ENCODE measurements at regions of chr3 and their contacts with region 1.

Region 1: DNA sequence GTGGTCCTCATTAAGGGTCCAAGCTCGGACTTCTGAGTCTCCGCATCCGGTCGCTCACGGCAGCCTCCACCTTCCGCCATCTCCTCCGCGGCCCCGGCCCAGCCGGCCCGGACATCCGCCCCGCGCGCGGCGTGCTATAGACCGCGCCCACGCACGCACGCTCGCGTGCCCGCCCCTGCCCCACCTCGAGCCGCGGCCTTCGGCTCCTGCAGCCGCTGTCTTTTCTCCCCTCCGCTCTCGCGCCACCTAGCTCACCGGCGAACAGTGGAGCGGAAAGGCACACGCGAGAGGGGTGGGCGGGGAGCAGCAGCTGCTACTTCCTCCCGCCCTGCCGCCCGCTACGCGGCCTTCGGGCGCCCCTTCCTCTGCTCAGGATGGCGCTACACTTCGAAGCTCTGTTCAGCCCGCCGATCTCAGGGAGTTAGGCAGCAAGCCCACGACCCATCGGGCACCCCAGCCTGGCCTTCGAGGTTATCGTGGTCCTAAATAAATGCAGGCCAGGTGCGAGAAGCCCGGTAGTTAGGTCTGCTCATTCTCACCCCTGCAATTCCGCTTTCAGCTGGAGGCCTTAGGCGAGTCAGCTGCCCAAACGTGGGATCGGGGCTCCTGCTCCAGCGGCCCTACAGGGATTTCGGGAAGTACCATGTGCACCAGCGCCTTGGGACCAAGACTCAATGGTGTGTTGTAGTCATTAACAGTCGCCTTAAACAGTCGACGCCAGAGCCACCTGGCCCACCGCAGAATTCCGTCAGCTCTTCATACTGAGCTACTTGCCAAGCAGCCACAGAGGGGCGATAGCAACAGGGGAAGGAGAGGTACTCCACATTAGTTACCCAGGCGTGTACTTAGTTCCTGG is at the start of gene USP4:
- DNase-seq: peak; percentile 96
- H3K4me3 Mint-ChIP-seq: peak within 1 kb of the TSS; percentile 91
- H3K27ac Mint-ChIP-seq: peak within 1 kb of the TSS; percentile 100
- H3K4me1 Mint-ChIP-seq: peaks cover 44% of the 10 kb centered on the region
- H3K27me3 Mint-ChIP-seq: no peaks in the 10 kb centered on the region
- total RNA-seq, gene USP4: 68.0 to 69.7 TPM

Region 2: DNA sequence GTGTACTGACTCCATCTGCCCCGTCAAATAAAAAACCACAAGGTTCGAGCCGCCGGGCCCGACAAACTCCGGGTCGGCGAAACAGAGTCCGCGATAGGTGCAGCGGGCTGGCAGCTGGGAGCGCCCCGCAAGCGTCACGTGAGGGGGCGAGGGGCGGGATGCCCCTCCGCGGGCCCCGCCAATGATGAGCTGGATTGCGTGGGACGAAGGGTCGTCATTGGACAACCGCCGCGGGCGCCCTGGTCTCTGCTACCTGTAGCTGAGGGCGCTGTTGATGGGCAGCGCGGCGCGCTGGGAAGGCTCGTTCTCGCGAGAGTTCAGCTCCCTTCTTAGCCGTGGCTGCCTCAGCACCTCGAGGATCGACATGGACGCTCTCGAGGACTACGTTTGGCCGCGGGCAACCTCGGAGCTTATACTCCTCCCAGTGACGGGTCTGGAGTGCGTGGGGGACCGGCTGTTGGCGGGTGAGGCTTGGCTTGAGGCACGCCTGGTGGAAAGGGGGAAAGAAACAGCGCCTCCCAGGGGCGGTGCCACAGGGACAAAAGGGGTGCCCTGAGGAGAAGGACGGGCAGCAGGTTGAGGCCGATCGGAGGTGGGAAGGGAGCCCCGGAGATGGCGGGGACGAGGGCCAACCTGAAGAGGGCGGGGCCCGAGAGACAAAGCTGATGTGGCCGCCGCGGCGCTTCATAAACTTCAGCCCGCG is 333.0 kb before region 1 on chr3 and contains the start of gene WDR6:
- CTCF ChIA-PET with region 1: no interaction called
- intact Hi-C with region 1: loop called (anchors 5 kb)
- DNase-seq: peak; percentile 99
- H3K4me3 Mint-ChIP-seq: peak within 1 kb of the TSS; percentile 99
- H3K27ac Mint-ChIP-seq: peak within 1 kb of the TSS; percentile 99
- H3K4me1 Mint-ChIP-seq: peaks cover 19% of the 10 kb centered on the region
- H3K27me3 Mint-ChIP-seq: no peaks in the 10 kb centered on the region
- total RNA-seq, gene WDR6: 119 to 120 TPM

Region 3: GRCh38 chr3:49171119-49171774 is 168.9 kb before region 1 on chr3 and contains the start of gene KLHDC8B:
- CTCF ChIA-PET with region 1: interaction called, 4 read pairs
- intact Hi-C with region 1: loop called (anchors 1 kb)
- DNase-seq: peak; percentile 88
- H3K4me3 Mint-ChIP-seq: peak within 1 kb of the TSS; percentile 67
- H3K27ac Mint-ChIP-seq: no peak within 1 kb of the TSS
- H3K4me1 Mint-ChIP-seq: peaks cover 9% of the 10 kb centered on the region
- H3K27me3 Mint-ChIP-seq: no peaks in the 10 kb centered on the region
- total RNA-seq, gene KLHDC8B: 1.8 to 2.4 TPM

Region 4: GRCh38 chr3:49358217-49358883 is 18.2 kb after region 1 on chr3 and contains the start of gene GPX1:
- CTCF ChIA-PET with region 1: interaction called, 11 read pairs
- intact Hi-C with region 1: loop called (anchors 1 kb)
- DNase-seq: peak; percentile 93
- H3K4me3 Mint-ChIP-seq: peak within 1 kb of the TSS; percentile 92
- H3K27ac Mint-ChIP-seq: peak within 1 kb of the TSS; percentile 94
- H3K4me1 Mint-ChIP-seq: peaks cover 23% of the 10 kb centered on the region
- H3K27me3 Mint-ChIP-seq: no peaks in the 10 kb centered on the region
- total RNA-seq, gene GPX1: 198 to 202 TPM

Region 5: GRCh38 chr3:49411968-49412631 is 71.9 kb after region 1 on chr3 and contains the starts of genes RHOA and TCTA:
- CTCF ChIA-PET with region 1: interaction called, 8 read pairs
- intact Hi-C with region 1: loop called (anchors 1 kb)
- DNase-seq: peak; percentile 99
- H3K4me3 Mint-ChIP-seq: peak within 1 kb of the TSS; percentile 94
- H3K27ac Mint-ChIP-seq: peak within 1 kb of the TSS; percentile 92
- H3K4me1 Mint-ChIP-seq: peaks cover 65% of the 10 kb centered on the region
- H3K27me3 Mint-ChIP-seq: no peaks in the 10 kb centered on the region
- total RNA-seq, gene RHOA: 463 to 491 TPM
- total RNA-seq, gene TCTA: 9.4 to 9.5 TPM

Region 6: DNA sequence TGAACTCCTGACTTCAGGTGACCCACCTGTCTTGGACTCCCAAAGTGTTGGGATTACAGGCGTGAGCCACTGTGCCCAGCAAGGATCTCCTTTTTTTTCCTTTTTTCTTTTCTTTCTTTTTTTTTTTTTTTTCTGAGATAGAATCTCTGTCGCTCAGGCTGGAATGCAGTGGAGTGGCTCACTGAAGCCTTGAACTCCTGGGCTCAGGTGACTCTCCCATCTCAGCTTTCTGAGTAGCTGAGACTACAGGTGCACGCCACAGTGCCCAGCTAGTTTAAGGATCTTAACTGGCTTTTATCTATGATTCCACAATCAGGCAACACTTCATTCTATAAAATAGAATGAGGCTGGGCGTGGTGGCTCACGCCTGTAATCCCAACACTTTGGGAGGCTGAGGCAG is 105.2 kb after region 1 on chr3:
- CTCF ChIA-PET with region 1: interaction called, 35 read pairs
- intact Hi-C with region 1: loop called (anchors 1 kb)
- DNase-seq: no peak
- H3K4me3 Mint-ChIP-seq: no peak overlapping the region
- H3K27ac Mint-ChIP-seq: no peak overlapping the region
- H3K4me1 Mint-ChIP-seq: peaks cover 15% of the 10 kb centered on the region
- H3K27me3 Mint-ChIP-seq: no peaks in the 10 kb centered on the region

Region 7: DNA sequence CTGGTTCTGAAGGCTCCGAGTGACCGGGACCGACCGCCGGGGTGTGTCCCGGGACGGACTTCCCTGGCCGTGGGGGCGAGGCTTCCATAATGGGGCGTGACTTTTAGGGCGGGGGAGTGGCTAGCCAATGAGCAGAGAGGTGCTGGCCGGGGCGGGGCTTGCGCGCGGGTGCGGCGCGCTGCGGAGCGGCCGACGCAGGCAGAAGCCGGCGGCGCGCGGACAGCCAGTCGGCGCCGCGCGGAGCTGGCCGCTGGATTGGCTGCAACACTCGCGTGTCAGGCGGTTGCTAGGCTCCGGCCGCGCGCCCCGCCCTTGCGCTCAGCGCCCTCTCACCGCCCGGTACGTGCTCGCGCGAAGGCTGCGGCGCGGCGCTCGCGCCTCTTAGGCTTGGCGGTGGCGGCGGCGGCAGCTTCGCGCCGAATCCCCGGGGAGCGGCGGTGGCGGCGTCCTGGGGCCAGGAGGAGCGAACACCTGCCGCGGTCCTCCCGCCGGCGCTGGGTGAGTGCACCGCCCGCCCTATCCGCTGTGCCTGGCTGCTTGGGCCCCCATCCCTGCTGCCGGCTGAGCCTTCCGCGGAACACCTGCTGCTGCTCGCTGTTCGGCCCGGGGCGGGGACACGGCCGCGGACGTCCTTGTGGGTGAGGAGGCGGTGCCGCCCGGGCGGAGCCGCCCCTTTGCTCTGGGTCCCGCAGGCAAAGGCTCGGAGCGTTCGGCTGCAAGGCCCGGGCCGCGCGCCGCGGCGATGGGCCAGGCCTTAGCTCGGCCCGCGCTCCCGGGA is 130.0 kb after region 1 on chr3 and contains the start of gene DAG1:
- CTCF ChIA-PET with region 1: interaction called, 4 read pairs
- intact Hi-C with region 1: loop called (anchors 1 kb)
- DNase-seq: peak; percentile 97
- H3K4me3 Mint-ChIP-seq: peak within 1 kb of the TSS; percentile 83
- H3K27ac Mint-ChIP-seq: peak within 1 kb of the TSS; percentile 85
- H3K4me1 Mint-ChIP-seq: peaks cover 14% of the 10 kb centered on the region
- H3K27me3 Mint-ChIP-seq: no peaks in the 10 kb centered on the region
- total RNA-seq, gene DAG1: 6.9 to 8.2 TPM

Region 8: GRCh38 chr3:49899815-49900214 is 559.6 kb after region 1 on chr3:
- CTCF ChIA-PET with region 1: no interaction called
- intact Hi-C with region 1: no loop called
- DNase-seq: peak; percentile 22
- H3K4me3 Mint-ChIP-seq: no peak overlapping the region
- H3K27ac Mint-ChIP-seq: no peak overlapping the region
- H3K4me1 Mint-ChIP-seq: peaks cover 7% of the 10 kb centered on the region
- H3K27me3 Mint-ChIP-seq: no peaks in the 10 kb centered on the region